Activated B cell treated with CpG ODN at 0.5 μM for 24 hours (primary cell): ENCODE measurements at regions of chr2 and their contacts with region 1.

Region 1: DNA sequence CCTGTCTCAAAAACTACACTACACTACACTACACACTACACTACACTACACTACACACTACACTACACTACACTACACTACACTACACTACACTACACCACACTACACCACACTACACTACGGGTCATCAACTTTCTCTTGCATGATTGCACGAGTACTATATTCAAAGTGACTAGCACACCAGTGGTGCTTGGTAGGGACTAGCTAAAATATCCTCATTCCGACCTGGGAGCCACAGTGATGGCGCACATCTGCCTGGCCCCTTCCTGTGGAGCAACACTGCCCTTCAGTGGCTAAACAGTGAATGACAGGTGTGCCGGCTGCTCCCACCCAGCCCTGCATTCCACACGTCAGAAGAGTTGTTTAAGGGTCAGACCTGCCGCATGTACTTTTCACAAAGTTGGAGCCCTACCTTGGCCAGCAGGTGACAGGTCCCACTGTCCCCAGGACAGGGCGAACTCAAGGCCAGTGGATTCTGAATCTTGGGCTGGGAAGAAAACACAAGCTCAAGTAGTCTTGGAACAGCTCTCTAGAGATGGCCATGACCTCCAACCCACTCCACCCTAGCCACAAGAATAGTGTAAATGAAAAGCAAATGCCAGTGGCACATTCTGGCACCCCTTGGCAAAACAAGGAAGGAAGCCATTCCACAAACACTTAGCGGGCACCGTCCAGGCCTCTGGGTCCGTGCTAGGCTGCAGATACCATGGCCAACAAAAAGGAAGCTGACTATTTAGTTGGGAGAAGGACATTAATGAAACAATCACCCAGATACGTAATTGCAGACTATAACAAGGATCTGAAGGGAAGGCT is 79.7 kb upstream of the MSH2 start:
- DNase-seq: peak; percentile 73
- ATAC-seq: peak; percentile 99
- H3K4me3 Mint-ChIP-seq: no peak overlapping the region
- H3K27ac Mint-ChIP-seq: no peak overlapping the region
- H3K4me1 Mint-ChIP-seq: peaks cover 8% of the 10 kb centered on the region
- H3K27me3 Mint-ChIP-seq: no peaks in the 10 kb centered on the region
- CTCF ChIP-seq: no peak

Region 2: GRCh38 chr2:46010925-46011490 is 1312.2 kb before region 1 on chr2:
- CTCF ChIA-PET with region 1: no interaction called
- POLR2A ChIA-PET with region 1: no interaction called
- intact Hi-C with region 1: loop called (anchors 5 kb)
- DNase-seq: no peak
- ATAC-seq: no peak
- H3K4me3 Mint-ChIP-seq: no peak overlapping the region
- H3K27ac Mint-ChIP-seq: no peak overlapping the region
- H3K4me1 Mint-ChIP-seq: no peaks in the 10 kb centered on the region
- H3K27me3 Mint-ChIP-seq: no peaks in the 10 kb centered on the region
- CTCF ChIP-seq: no peak

Region 3: DNA sequence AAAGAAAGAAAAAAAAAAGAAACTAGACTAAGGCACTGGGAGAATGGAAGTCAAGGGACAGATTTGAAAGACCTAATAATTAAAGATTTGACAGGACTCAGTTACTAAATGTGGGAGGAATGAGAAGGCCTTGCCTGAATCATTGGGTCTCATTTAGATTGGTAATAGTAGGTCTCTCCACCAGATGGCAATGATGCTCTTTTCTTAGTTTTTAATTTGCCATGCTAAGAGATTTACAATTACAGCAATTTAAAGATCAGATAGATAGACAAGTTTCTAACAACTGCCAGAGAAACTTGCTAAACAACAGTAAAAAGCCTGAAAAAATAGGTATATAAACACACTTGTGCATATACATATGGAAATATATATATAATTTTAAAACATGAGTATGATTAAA is 690.9 kb before region 1 on chr2:
- CTCF ChIA-PET with region 1: no interaction called
- POLR2A ChIA-PET with region 1: no interaction called
- intact Hi-C with region 1: loop called (anchors 1 kb)
- DNase-seq: no peak
- ATAC-seq: no peak
- H3K4me3 Mint-ChIP-seq: no peak overlapping the region
- H3K27ac Mint-ChIP-seq: no peak overlapping the region
- H3K4me1 Mint-ChIP-seq: peaks cover 7% of the 10 kb centered on the region
- H3K27me3 Mint-ChIP-seq: no peaks in the 10 kb centered on the region
- CTCF ChIP-seq: no peak

Region 4: GRCh38 chr2:46657042-46657504 is 666.1 kb before region 1 on chr2:
- CTCF ChIA-PET with region 1: interaction called, 16 read pairs
- POLR2A ChIA-PET with region 1: no interaction called
- intact Hi-C with region 1: loop called (anchors 1 kb)
- DNase-seq: no peak
- ATAC-seq: peak; percentile 66
- H3K4me3 Mint-ChIP-seq: no peak overlapping the region
- H3K27ac Mint-ChIP-seq: no peak overlapping the region
- H3K4me1 Mint-ChIP-seq: peaks cover 4% of the 10 kb centered on the region
- H3K27me3 Mint-ChIP-seq: no peaks in the 10 kb centered on the region
- CTCF ChIP-seq: no peak

Region 5: DNA sequence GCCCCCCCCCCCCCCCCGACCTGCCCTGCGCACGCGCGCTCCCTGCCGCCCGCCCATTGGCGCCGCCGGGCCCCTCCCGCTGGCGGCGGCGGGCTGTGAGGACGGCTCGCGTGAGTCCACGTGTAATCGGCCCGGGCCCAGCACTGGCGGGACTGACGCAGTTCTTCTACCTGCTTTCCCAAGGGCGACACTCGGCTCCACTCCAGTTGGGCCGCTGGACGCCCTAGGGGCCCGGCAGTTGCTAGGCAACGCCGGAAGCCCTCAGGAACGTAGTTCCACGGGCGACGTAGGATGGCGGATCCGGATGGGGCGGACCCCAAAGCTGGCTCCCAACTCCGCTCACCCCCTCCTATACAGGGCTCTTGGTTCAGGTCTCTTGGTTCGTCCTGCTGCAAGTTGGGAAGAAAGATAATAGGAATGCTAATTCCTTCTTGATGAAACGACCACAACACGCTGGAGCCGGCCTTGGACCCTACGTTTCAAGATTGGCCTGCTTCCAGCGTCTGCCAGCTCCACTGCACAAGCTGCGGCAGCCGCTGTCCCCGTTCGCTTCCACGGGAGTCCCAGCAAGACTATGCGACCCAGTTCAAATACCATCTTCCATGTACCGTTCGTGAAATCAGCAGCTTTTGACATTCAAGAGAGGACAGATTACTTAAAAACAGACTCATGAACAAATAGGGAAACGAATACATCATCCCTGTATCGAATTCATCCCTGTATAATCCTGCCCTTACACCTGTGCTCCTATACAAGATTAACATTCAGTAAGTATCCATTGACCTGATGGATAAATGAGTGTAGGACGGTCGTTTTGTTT is 407.2 kb before region 1 on chr2:
- CTCF ChIA-PET with region 1: interaction called, 20 read pairs
- POLR2A ChIA-PET with region 1: no interaction called
- intact Hi-C with region 1: loop called (anchors 1 kb)
- DNase-seq: peak; percentile 80
- ATAC-seq: peak; percentile 83
- H3K4me3 Mint-ChIP-seq: peak overlapping the region; percentile 90
- H3K27ac Mint-ChIP-seq: peak overlapping the region; percentile 81
- H3K4me1 Mint-ChIP-seq: peaks cover 65% of the 10 kb centered on the region
- H3K27me3 Mint-ChIP-seq: no peaks in the 10 kb centered on the region
- CTCF ChIP-seq: no peak

Region 6: GRCh38 chr2:47272031-47272864 is 51.0 kb before region 1 on chr2:
- CTCF ChIA-PET with region 1: interaction called, 14 read pairs
- POLR2A ChIA-PET with region 1: no interaction called
- intact Hi-C with region 1: loop called (anchors 1 kb)
- DNase-seq: peak; percentile 68
- ATAC-seq: peak; percentile 92
- H3K4me3 Mint-ChIP-seq: peak overlapping the region; percentile 76
- H3K27ac Mint-ChIP-seq: peak overlapping the region; percentile 52
- H3K4me1 Mint-ChIP-seq: peaks cover 25% of the 10 kb centered on the region
- H3K27me3 Mint-ChIP-seq: no peaks in the 10 kb centered on the region
- CTCF ChIP-seq: peak; percentile 96

Region 7: DNA sequence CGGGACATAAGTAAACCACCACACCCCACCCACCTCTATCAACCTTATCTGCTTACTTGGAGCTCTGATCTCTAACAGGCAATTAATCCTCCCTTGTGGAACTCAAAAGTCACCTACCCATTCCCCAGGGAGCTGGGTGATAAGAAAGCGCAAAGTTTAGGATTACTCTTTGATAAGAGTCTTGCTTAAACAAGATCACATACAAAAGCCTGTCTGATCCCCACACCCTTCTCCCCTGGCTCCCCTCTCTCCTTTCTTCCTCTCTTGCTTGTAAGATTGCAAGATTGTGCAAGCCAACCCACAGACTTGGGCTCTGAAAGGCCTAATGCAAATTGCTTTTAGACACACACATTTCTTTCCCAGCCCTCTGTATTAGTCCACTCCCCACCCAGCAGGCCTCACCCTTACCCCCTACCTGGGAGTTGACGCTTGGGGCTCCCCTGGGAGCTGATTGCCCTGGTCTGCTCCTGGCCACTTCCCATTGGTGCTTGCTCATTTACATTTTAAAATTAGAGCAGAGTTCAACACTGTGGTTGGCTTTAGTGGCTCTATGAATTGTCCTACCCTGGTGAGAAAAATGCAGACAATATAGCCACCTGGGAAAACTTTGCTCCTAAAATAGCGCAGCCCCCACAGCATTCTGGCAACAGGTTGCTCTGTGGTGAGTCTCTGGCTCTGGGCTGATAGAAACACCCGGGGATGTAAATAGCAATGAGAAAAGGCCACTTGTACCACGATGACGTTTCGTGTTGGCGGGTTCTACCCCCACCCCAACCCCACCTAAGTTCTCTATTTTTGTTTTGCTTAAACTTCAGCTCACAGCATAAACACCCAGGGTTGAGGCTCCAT is 13.0 kb before region 1 on chr2:
- CTCF ChIA-PET with region 1: interaction called, 10 read pairs
- POLR2A ChIA-PET with region 1: no interaction called
- intact Hi-C with region 1: no loop called
- DNase-seq: no peak
- ATAC-seq: peak; percentile 81
- H3K4me3 Mint-ChIP-seq: peak overlapping the region; percentile 64
- H3K27ac Mint-ChIP-seq: peak overlapping the region; percentile 80
- H3K4me1 Mint-ChIP-seq: peaks cover 46% of the 10 kb centered on the region
- H3K27me3 Mint-ChIP-seq: peaks cover under 1% of the 10 kb centered on the region
- CTCF ChIP-seq: no peak

Region 8: DNA sequence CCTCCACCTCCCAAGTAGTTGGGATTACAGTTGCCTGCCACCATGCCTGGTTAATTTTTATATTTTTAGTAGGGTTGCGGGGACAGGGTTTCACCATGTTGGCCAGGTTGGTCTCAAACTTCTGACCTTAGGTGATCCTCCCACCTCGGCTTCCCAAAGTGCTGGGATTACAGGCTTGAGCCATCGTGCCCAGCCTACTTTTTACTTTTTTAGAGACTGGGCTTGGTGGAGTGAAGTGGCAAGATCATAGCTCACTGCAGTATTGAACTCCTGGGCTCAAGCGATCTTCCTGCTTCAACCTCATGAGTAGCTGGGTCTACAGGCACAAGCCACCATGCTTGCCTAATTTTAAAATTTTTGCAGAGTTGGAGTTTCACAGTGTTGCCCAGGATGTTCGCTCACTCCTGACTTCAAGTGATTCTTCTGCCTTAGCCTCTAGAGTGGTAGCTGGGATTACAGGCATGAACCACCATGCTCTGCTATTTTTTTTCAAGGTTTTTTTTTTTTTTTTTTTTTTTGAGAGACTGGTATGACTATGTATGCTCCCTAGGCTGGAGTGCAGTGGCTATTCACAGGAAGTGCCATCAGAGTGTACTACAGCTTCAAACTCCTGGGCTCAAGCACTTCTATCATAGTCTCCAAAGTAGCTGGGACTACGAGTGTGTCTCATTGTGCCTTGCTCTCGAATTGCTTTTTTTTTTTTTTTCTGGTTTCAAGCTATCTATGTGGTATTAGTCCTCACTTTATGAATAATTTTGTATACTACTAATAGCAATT is 91.7 kb after region 1 on chr2:
- CTCF ChIA-PET with region 1: no interaction called
- POLR2A ChIA-PET with region 1: no interaction called
- intact Hi-C with region 1: no loop called
- DNase-seq: no peak
- ATAC-seq: no peak
- H3K4me3 Mint-ChIP-seq: no peak overlapping the region
- H3K27ac Mint-ChIP-seq: no peak overlapping the region
- H3K4me1 Mint-ChIP-seq: no peaks in the 10 kb centered on the region
- H3K27me3 Mint-ChIP-seq: no peaks in the 10 kb centered on the region
- CTCF ChIP-seq: no peak

Region 9: DNA sequence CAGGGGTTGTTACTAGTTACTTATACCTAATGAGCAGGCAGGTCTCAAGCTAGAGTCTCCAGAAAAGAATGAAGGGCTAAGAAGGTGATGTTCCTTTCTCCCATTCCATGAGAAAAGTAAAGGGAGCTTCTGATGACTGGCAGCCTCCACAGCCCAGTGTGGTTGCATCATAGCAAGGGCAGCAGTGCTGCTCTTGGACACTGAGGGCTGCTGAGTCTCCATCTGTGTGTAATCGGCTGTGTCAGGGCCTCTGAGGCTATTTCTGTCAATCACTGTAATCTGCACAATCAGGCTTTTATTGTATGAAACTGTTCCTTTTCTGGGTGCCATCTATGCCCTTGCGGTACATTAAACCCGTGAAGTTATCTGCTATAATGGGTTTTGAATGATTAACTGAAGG is 747.2 kb after region 1 on chr2:
- CTCF ChIA-PET with region 1: no interaction called
- POLR2A ChIA-PET with region 1: no interaction called
- intact Hi-C with region 1: no loop called
- DNase-seq: no peak
- ATAC-seq: no peak
- H3K4me3 Mint-ChIP-seq: no peak overlapping the region
- H3K27ac Mint-ChIP-seq: no peak overlapping the region
- H3K4me1 Mint-ChIP-seq: peaks cover 2% of the 10 kb centered on the region
- H3K27me3 Mint-ChIP-seq: peaks cover 5% of the 10 kb centered on the region
- CTCF ChIP-seq: no peak